ENCODE measurements at regions of chr2 and their contacts with region 1.

Region 1: DNA sequence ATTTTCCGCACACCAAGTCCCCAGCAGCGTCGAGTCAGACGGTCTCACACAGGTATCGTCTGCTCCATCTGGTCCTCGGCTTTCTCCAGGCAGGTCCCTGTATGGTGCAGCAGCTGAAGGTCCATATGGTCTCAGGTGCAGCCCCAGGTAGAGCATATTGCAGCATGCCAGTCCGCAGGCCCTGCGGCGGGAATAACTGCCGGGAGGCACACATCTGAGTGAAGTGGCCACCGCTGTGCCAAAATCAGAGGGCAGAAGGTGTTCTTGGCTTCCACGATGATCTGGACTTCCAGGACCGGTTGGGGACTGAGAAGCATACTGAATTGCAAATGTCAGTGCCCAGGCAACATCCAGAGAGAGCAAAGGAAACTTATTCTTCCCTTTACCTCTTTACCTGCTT is 320.3 kb downstream of the RNF144A start:
- DNase-seq: no peak
- H3K4me3 ChIP-seq: no peak overlapping the region
- H3K27ac ChIP-seq: no peak overlapping the region
- H3K4me1 ChIP-seq: no peaks in the 10 kb centered on the region
- H3K27me3 ChIP-seq: no peaks in the 10 kb centered on the region
- CTCF ChIP-seq: no peak
- POLR2A ChIP-seq: no peak

Region 2: DNA sequence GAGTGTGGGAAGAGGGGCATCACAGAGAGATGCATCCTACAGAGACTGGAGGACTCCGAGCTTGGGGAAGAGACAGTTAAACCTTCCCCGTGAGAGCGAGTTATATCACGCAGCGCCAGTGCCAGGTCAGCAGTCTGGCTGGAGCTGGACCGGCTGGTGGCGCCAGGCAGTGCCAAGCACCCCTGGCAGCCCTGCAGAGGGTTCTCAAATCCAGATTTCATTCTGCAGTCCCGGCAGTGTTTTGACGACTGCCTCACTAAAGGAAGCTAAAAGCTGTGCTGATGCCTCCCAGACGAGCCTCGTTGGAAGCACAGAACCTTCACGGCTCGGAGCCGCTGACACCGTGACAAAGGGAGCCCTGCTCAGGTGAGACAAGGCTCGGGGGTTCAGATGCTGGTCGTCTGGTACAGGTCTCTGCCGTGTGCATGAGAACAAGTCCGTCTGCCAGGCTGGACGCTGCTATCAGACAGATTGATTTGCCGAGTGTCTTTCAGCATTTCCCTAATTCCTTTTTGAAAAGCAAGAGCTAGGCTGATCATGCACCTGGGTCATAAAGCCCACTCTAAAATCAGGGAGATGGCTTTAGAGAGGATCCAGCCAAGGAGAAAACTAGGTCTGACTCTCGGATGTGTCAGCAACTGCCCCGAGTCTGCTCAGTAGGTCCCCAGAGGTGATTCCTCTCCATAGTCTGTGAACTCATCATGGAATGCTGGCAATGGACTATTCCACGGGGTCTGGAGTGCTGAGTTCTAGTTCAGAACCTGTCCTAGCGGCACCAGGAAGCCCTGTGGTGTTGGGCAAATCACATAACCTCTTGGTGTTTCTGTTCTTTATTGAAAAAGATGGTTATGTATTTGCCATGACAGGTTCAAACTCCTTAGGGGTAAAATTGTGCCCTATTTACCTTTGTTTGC is 1304.7 kb before region 1 on chr2:
- intact Hi-C with region 1: loop called (anchors 10 kb)
- DNase-seq: no peak
- H3K4me3 ChIP-seq: peak overlapping the region in 1 of 3 donors; percentile 19
- H3K27ac ChIP-seq: no peak overlapping the region
- H3K4me1 ChIP-seq: no peaks in the 10 kb centered on the region
- H3K27me3 ChIP-seq: peaks cover 0 to 7% of the 10 kb centered on the region in 2 donors
- CTCF ChIP-seq: no peak
- POLR2A ChIP-seq: no peak

Region 3: GRCh38 chr2:7830616-7831015 is 593.1 kb after region 1 on chr2:
- intact Hi-C with region 1: loop called (anchors 5 kb)
- DNase-seq: no peak
- H3K4me3 ChIP-seq: no peak overlapping the region
- H3K27ac ChIP-seq: no peak overlapping the region
- H3K4me1 ChIP-seq: no peaks in the 10 kb centered on the region
- H3K27me3 ChIP-seq: no peaks in the 10 kb centered on the region
- CTCF ChIP-seq: no peak
- POLR2A ChIP-seq: no peak